Right ventricle myocardium inferior (tissue), 1 donor: ENCODE measurements at regions of chr20 and their contacts with region 1.

Region 1: DNA sequence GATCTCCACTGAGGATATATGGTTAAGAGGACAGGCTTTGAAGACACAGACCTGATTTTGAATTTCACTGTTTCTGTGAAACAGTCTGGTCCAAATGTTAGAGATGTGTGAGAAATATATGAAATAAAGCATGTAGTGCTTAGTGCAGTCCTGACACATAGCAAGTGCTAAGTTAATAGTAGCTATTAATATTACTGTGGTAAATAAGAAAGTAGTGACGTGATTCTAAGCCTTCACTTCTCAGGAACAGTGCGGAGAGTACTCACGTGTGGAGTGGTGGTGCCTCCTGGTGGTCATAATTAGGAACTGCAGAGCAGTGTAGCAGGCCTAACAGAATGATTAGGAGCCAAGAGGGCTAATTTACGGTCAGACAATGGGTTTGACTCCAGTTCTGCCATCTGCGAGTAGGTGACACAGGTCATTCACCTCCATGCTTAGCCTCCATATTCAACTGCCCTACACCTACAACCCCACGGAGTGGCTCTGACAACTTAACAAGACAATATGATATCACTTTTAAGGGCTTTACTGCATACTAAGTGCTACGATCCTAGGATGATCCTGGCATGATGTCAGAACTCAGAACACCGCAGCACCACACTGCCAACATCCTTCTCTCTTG is 106.2 kb downstream of the JPH2 start:
- DNase-seq: no peak
- ATAC-seq: peak; percentile 83

Region 2: DNA sequence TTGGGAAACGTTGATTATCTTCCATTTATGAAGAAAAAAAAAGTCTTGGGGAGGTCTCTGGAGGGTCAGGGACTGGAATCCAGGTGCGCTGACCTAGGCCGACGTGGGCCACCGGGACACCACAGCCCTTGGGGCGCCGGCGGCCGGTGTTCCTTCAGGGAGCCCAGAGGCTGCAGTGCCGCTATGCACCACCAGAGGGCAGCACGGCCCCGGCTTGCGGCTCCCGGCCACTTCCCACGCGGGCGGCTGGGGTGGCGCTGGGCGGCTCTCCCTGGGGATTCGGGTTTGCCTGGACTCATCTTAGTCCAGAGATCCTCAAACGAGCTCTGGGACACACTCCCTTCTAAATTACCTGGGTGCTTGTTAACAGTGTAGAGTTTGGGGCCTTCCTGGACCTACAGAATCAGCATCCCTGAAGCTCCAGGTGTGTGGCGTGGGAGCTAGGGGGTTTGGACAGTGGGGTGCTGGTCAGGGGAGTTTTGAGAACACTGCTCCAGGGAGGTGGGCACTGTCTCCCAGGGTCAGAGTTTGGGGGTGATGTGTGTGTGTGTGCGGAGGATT is 330.9 kb before region 1 on chr20:
- intact Hi-C with region 1: loop called (anchors 2 kb)
- DNase-seq: peak; percentile 94
- ATAC-seq: peak; percentile 89

Region 3: DNA sequence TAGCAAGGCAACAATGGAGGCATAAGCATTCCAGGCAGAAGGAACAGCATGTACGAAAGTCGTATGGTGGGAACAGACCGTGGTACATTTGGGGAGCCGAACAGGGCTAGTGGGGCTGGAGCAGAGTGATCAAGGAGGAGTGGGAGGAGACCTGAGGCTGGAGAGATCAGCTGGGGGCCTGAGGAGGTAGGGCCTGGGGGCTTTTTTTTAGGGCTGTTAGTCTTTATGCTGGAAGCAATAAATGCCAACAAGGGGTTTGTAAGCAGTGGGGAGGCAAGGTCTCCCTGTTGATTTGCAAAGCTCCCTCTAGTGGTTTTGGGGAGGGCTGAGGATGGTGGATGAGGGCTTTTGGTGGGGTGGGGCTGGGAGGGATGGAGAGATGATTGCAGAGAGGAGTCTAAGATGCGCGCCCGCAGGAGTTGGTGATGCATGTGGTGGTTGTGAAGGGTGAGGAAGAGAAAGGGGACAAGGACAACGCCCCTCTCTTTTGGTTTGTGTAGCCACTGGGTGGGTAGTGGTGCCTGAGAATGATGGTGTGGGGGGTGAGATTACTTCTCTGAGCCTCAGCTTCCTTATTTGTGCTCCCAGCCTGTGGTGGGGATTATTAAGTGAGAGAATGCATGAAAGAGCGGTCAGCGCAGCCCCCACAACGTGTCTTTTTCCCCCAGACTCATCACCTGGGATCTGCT is 240.2 kb before region 1 on chr20:
- intact Hi-C with region 1: loop called (anchors 2 kb)
- DNase-seq: no peak
- ATAC-seq: no peak

Region 4: DNA sequence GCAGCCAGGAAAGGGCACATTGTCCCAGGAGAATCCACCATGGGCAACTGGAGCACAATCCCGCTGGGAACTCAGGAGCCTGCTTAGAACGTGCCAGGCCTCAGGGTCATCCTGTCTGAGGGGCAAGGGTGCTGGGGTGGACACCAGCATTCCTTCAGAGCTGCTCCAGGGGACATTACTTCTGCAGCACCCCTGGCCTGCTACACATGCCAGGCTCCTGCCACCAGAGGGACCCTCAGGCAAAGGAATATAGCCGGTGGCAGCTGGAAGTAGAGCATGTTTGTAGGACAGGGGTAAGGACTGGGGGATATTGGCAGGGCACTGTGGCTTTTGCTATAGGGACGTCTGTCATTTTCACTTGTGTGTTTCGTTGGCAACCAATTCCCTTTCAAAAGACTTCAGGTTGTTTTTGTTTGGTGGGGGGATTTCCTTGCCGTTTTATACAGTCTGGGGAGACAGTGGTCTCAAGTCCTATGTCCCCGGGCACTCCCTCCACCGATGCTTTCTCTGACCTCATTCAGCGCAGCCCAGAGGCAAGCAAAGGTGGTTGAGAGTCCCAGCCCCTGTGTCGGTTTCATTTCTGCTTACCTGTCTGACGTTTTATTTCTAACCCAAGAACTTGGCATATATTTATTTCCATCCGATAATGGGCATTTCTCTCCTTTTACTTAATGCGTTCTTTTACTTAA is 24.6 kb before region 1 on chr20:
- intact Hi-C with region 1: loop called (anchors 2 kb)
- DNase-seq: peak; percentile 64
- ATAC-seq: peak; percentile 86

Region 5: GRCh38 chr20:44109951-44110361 is 29.2 kb after region 1 on chr20:
- intact Hi-C with region 1: no loop called
- DNase-seq: no peak
- ATAC-seq: peak; percentile 9